CD8-positive, alpha-beta T cell (primary cell): ENCODE measurements at regions of chr7 and their contacts with region 1.

Region 1: GRCh38 chr7:23298885-23299769 is at the start of gene MALSU1:
- DNase-seq: peak; percentile 90 to 99 (median 96)
- ATAC-seq: peak; percentile 99
- H3K4me3 ChIP-seq: peak within 1 kb of the TSS; percentile 83 to 96
- H3K4me3 Mint-ChIP-seq: peak within 1 kb of the TSS; percentile 80
- H3K27ac ChIP-seq: peak within 1 kb of the TSS; percentile 72 to 80
- H3K27ac Mint-ChIP-seq: peak within 1 kb of the TSS; percentile 95
- H3K4me1 ChIP-seq: peaks cover 22% of the 10 kb centered on the region
- H3K4me1 Mint-ChIP-seq: peaks cover 45% of the 10 kb centered on the region
- H3K27me3 ChIP-seq: no peaks in the 10 kb centered on the region
- H3K27me3 Mint-ChIP-seq: no peaks in the 10 kb centered on the region
- CTCF ChIP-seq: no peak
- total RNA-seq, gene MALSU1: 56.0 to 56.6 TPM

Region 2: GRCh38 chr7:22822486-22823141 is 476.5 kb before region 1 on chr7 and contains the start of gene TOMM7:
- CTCF ChIA-PET with region 1: no interaction called
- POLR2A ChIA-PET with region 1: no interaction called
- intact Hi-C with region 1: loop called in 1 of 2 experiments (anchors 10 kb)
- DNase-seq: peak; percentile 72 to 99 (median 86)
- ATAC-seq: peak; percentile 96
- H3K4me3 ChIP-seq: peak within 1 kb of the TSS; percentile 74 to 89
- H3K4me3 Mint-ChIP-seq: peak within 1 kb of the TSS; percentile 99
- H3K27ac ChIP-seq: peak within 1 kb of the TSS; percentile 85
- H3K27ac Mint-ChIP-seq: peak within 1 kb of the TSS; percentile 99
- H3K4me1 ChIP-seq: peaks cover 20% of the 10 kb centered on the region
- H3K4me1 Mint-ChIP-seq: peaks cover 41% of the 10 kb centered on the region
- H3K27me3 ChIP-seq: no peaks in the 10 kb centered on the region
- H3K27me3 Mint-ChIP-seq: peaks cover 4% of the 10 kb centered on the region
- CTCF ChIP-seq: no peak
- total RNA-seq, gene TOMM7: 595 to 610 TPM

Region 3: DNA sequence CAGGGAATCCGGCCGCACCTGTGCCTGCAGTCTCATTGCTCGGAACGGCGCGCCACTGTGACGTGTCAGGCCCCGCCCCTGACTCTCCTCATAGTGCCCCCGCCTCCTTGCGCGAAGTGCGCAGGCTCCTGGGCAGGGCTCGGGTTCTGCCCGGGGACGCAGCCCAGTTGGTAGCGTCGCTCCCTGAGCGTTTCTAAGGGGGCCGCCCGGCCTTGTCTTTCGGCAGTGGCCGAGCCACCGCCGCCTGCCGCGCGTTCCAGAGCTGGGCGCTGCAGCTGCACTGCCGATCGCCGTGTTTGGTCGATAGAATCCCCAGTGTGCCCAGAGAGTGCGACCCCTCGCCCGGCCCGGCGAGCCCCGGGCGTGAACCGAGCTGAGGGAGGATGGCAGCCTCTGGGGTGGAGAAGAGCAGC is 193.5 kb before region 1 on chr7 and contains the start of gene KLHL7:
- CTCF ChIA-PET with region 1: no interaction called
- POLR2A ChIA-PET with region 1: interaction called, 3 read pairs
- intact Hi-C with region 1: loop called (anchors 1 to 5 kb)
- DNase-seq: peak; percentile 92 to 98 (median 96)
- ATAC-seq: peak; percentile 95
- H3K4me3 ChIP-seq: peak within 1 kb of the TSS; percentile 93 to 94
- H3K4me3 Mint-ChIP-seq: peak within 1 kb of the TSS; percentile 98
- H3K27ac ChIP-seq: peak within 1 kb of the TSS; percentile 97
- H3K27ac Mint-ChIP-seq: peak within 1 kb of the TSS; percentile 95
- H3K4me1 ChIP-seq: peaks cover 23% of the 10 kb centered on the region
- H3K4me1 Mint-ChIP-seq: peaks cover 49% of the 10 kb centered on the region
- H3K27me3 ChIP-seq: no peaks in the 10 kb centered on the region
- H3K27me3 Mint-ChIP-seq: no peaks in the 10 kb centered on the region
- CTCF ChIP-seq: no peak
- total RNA-seq, gene KLHL7: 19.2 to 20.2 TPM

Region 4: GRCh38 chr7:23347682-23348180 is 48.6 kb after region 1 on chr7:
- CTCF ChIA-PET with region 1: no interaction called
- POLR2A ChIA-PET with region 1: interaction called, 5 read pairs
- intact Hi-C with region 1: loop called in 1 of 2 experiments (anchors 2 kb)
- DNase-seq: no peak
- ATAC-seq: no peak
- H3K4me3 ChIP-seq: no peak overlapping the region
- H3K4me3 Mint-ChIP-seq: peak overlapping the region; percentile 66
- H3K27ac ChIP-seq: no peak overlapping the region
- H3K27ac Mint-ChIP-seq: no peak overlapping the region
- H3K4me1 ChIP-seq: peaks cover 8% of the 10 kb centered on the region
- H3K4me1 Mint-ChIP-seq: peaks cover 19% of the 10 kb centered on the region
- H3K27me3 ChIP-seq: peaks cover 0 to under 1% of the 10 kb centered on the region in 2 experiments
- H3K27me3 Mint-ChIP-seq: no peaks in the 10 kb centered on the region
- CTCF ChIP-seq: no peak

Region 5: DNA sequence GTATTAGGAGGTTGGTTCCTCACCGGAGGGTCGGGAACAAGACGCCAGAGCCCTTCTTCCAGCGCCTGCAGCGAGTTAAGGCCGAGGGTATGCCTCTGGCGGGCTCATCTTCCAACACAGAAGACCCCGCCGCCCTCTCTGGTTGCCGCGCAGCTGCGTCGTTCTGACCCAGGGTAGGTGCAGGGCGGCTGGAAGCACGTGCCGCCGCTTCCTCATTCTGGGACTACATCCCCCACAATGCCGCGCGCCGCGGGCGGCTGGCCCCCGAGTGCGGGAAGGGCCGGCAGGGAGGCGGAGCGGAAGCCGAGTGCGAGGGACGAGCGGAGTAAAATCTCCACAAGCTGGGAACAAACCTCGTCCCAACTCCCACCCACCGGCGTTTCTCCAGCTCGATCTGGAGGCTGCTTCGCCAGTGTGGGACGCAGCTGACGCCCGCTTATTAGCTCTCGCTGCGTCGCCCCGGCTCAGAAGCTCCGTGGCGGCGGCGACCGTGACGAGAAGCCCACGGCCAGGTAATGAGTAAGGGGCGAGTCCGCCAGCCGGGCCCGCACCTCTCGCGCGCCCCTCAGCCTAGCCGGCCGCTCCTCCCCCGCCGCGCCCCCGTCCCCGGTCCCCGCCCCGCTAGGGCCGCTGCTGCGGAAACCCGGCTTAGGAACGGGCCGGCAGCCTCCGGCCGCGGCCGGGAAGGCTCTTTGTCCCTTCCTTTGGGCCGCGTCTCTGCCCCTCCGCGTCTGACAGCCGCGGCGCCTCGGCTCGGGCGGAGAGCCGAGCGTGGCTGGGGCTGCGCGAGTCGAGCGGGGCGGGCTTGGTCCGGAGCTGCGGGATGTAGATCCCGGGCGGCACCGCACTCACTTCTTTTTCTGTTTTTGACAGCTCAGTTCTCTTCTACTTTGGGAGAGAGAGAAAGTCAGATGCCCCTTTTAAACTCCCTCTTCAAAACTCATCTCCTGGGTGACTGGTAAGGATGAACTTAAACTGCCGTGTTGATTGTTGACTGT is 298.3 kb after region 1 on chr7 and contains the start of gene CCDC126:
- CTCF ChIA-PET with region 1: no interaction called
- POLR2A ChIA-PET with region 1: interaction called, 4 read pairs
- intact Hi-C with region 1: loop called (anchors 1 to 5 kb)
- DNase-seq: peak; percentile 57 to 88 (median 81)
- ATAC-seq: peak; percentile 89
- H3K4me3 ChIP-seq: peak within 1 kb of the TSS; percentile 81 to 91
- H3K4me3 Mint-ChIP-seq: peak within 1 kb of the TSS; percentile 85
- H3K27ac ChIP-seq: peak within 1 kb of the TSS; percentile 55 to 63
- H3K27ac Mint-ChIP-seq: peak within 1 kb of the TSS; percentile 49
- H3K4me1 ChIP-seq: peaks cover 21% of the 10 kb centered on the region
- H3K4me1 Mint-ChIP-seq: peaks cover 34% of the 10 kb centered on the region
- H3K27me3 ChIP-seq: no peaks in the 10 kb centered on the region
- H3K27me3 Mint-ChIP-seq: no peaks in the 10 kb centered on the region
- CTCF ChIP-seq: no peak
- total RNA-seq, gene CCDC126: 10.8 to 11.9 TPM

Region 6: GRCh38 chr7:25179771-25180591 is 1880.9 kb after region 1 on chr7:
- CTCF ChIA-PET with region 1: no interaction called
- POLR2A ChIA-PET with region 1: no interaction called
- intact Hi-C with region 1: loop called in 1 of 2 experiments (anchors 10 kb)
- DNase-seq: peak; percentile 92 to 99 (median 95)
- ATAC-seq: peak; percentile 98
- H3K4me3 ChIP-seq: peak overlapping the region; percentile 64 to 70
- H3K4me3 Mint-ChIP-seq: peak overlapping the region; percentile 91
- H3K27ac ChIP-seq: peak overlapping the region; percentile 57 to 83
- H3K27ac Mint-ChIP-seq: peak overlapping the region; percentile 92
- H3K4me1 ChIP-seq: peaks cover 7% of the 10 kb centered on the region
- H3K4me1 Mint-ChIP-seq: peaks cover 22% of the 10 kb centered on the region
- H3K27me3 ChIP-seq: no peaks in the 10 kb centered on the region
- H3K27me3 Mint-ChIP-seq: peaks cover under 1% of the 10 kb centered on the region
- CTCF ChIP-seq: peak; percentile 91